Psoas muscle (tissue), 8 donors: ENCODE measurements at regions of chr9 and their contacts with region 1.

Region 1: DNA sequence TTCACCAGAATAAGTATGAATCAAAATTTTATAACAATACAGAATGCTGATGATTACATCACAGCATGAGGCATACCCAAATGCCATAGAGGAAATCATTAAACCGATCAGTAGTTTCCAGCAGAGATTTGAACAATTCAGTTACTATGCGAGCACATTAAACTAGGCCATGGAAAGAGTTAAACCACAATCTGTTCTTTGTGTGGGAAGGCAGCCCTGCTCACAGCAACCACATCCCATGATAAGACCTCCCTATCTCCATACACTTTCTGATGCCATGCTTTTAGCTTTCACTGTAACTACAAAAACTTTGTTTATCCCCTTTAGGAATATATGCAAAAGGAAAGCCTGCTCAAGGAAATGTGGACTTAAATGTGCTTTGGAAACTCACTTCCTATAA is 4.5 kb downstream of the NFIB start:
- DNase-seq: no peak
- ATAC-seq: no peak
- H3K4me3 ChIP-seq: peak overlapping the region; percentile 93
- H3K27ac ChIP-seq: peak overlapping the region; percentile 99
- H3K4me1 ChIP-seq: peaks cover 59% of the 10 kb centered on the region
- H3K27me3 ChIP-seq: no peaks in the 10 kb centered on the region
- CTCF ChIP-seq: no peak

Region 2: GRCh38 chr9:14251154-14252071 is 58.0 kb before region 1 on chr9:
- intact Hi-C with region 1: loop called (anchors 5 to 10 kb)
- DNase-seq: peak; percentile 79 to 92
- ATAC-seq: peak; percentile 94 to 97 (median 96)
- H3K4me3 ChIP-seq: peak overlapping the region; percentile 31
- H3K27ac ChIP-seq: peak overlapping the region; percentile 80
- H3K4me1 ChIP-seq: peaks cover 28% of the 10 kb centered on the region
- H3K27me3 ChIP-seq: no peaks in the 10 kb centered on the region
- CTCF ChIP-seq: no peak

Region 3: DNA sequence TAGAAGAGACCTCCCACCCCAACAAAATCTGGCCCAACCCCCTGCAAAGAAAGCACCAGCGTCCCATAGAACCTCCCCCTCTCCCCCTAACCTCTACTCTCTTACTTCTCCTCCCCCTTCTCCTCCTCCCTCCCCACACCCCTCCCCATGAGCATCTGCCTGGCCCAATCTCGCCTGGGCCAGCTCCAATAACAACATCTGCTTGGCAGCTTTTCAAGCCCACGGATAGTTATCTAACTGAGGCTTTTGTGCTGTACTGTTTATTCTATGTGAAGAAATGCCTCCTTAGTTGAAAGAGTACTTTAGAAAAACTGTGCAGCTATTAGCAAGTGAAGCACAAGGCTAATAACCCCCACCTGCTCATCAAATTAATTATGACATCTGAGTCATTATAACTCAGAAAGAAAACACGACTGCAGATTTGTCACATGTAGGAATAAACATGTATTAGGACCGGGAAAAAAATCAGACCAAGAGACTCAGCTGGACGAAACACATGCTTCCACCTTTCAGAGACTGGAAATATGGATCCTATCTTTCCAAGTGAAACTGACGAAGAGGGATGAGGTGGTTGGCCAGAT is 38.2 kb before region 1 on chr9:
- intact Hi-C with region 1: loop called (anchors 5 kb)
- DNase-seq: peak; percentile 48 to 68
- ATAC-seq: peak in 3 of 4 donors; percentile 44 to 53 (median 51)
- H3K4me3 ChIP-seq: peak overlapping the region; percentile 54
- H3K27ac ChIP-seq: peak overlapping the region; percentile 68
- H3K4me1 ChIP-seq: peaks cover 73% of the 10 kb centered on the region
- H3K27me3 ChIP-seq: no peaks in the 10 kb centered on the region
- CTCF ChIP-seq: no peak

Region 4: GRCh38 chr9:14323985-14324650 is 14.7 kb after region 1 on chr9:
- intact Hi-C with region 1: loop called in 1 of 2 experiments (anchors 2 kb)
- DNase-seq: no peak
- ATAC-seq: no peak
- H3K4me3 ChIP-seq: peak overlapping the region; percentile 93
- H3K27ac ChIP-seq: peak overlapping the region; percentile 99
- H3K4me1 ChIP-seq: peaks cover 63% of the 10 kb centered on the region
- H3K27me3 ChIP-seq: no peaks in the 10 kb centered on the region
- CTCF ChIP-seq: no peak